GM18951 (cell line): ENCODE measurements at regions of chr9 and their contacts with region 1.

Region 1: GRCh38 chr9:76810377-76810957 is 46.2 kb downstream of the PCA3 start:
- POLR2A ChIP-seq: no peak

Region 2: GRCh38 chr9:76353280-76353679 is 457.2 kb before region 1 on chr9:
- in situ Hi-C with region 1: no loop called
- POLR2A ChIP-seq: no peak

Region 3: GRCh38 chr9:76987594-76988200 is 177.2 kb after region 1 on chr9:
- in situ Hi-C with region 1: loop called (anchors 10 kb)
- POLR2A ChIP-seq: no peak

Region 4: DNA sequence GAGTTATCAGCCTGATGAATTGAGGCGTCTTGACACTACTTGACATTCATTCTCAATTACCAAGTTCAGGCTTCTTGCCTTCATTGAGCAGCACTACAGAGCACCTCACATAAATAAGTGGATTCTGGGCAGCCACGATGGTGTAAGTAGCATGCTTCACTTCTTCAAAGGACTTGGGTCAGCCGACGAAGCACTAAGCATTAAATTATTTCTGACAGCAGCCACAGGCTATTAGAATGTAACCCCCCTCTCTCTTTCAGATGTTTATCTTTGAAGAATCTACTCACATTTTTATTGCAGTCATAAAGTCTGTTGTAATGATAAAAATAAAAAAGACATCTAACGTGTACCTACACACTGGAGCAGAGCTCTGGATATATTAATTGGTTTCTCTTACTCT is 320.9 kb after region 1 on chr9:
- in situ Hi-C with region 1: loop called (anchors 25 kb)
- POLR2A ChIP-seq: no peak